ENCODE measurements at regions of chr2 and their contacts with region 1.

Region 1: GRCh38 chr2:80326214-80326613 is 21.7 kb upstream of the LRRTM1 start:
- H3K4me3 ChIP-seq: no peak overlapping the region
- H3K27ac ChIP-seq: no peak overlapping the region
- H3K4me1 ChIP-seq: no peaks in the 10 kb centered on the region
- CTCF ChIP-seq: no peak

Region 2: DNA sequence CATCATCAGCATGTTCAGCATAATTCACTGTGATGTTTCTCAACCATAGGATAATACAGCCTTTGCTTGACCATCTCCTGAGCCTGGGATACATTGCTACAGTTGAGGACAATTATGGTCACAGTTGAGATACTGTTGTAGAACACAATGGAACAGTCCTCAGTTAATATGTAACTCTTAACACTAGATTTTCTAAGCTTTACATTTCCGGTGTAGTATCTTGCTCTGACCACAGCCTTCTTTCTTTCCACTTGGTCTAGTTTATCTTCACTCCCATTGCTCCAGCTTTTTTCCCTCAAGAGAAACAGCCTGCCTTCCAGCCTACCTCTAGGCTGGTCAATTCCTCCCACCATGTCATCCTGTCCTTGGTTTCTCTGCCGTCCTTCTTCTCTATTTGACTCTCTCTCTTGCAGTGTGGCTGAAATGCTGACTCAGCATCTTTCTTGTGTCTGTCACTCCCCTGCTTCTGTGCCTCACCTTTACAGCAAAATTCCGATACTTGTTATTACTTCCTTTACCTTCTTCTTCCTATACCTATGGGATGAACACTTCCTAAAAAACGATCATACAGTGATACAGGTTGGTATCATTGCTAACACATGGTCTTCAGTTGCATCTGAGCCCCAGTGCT is 732.9 kb before region 1 on chr2:
- CTCF ChIA-PET with region 1: no interaction called
- POLR2A ChIA-PET with region 1: no interaction called
- H3K4me3 ChIP-seq: no peak overlapping the region
- H3K27ac ChIP-seq: no peak overlapping the region
- H3K4me1 ChIP-seq: no peaks in the 10 kb centered on the region
- CTCF ChIP-seq: no peak

Region 3: DNA sequence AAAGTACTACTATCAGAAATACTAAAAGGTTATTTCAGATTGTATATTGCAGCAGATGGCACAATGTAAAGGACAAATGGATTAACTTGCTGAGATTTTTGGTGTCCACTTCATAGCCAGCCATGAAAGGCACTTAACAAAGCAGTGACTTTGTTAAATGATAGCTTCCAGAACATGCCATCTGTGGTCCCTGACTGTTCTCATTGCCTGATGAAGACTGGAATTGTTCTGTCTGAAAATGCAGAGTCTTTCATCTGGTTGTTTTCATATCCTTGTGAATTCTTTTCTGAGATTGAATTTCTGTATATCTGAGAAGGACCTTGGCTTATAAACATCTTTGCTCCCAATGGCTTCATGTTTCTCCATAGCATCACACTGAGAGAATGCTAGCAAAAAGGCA is 22.7 kb after region 1 on chr2:
- CTCF ChIA-PET with region 1: interaction called, 18 read pairs
- POLR2A ChIA-PET with region 1: no interaction called
- H3K4me3 ChIP-seq: no peak overlapping the region
- H3K27ac ChIP-seq: no peak overlapping the region
- H3K4me1 ChIP-seq: no peaks in the 10 kb centered on the region
- CTCF ChIP-seq: no peak

Region 4: DNA sequence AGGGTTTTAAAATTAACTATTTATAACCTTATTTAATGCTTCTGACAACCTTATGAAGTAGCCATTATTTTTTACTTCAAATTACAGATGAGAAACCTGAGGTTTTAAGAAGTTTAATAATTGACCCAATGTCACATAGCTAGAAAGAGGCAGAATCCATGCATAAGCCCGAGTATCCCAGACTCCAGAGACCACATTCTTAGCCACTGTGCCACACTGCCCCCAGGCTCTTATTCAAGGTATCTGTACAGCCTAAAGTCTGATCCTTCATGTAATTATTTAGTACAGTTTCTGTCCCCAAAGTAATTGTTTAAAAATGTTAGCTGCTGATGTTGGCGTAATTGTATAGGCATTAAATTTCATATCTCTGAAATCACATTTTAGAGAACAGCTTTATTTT is 103.0 kb after region 1 on chr2:
- CTCF ChIA-PET with region 1: interaction called, 15 read pairs
- POLR2A ChIA-PET with region 1: no interaction called
- H3K4me3 ChIP-seq: no peak overlapping the region
- H3K27ac ChIP-seq: no peak overlapping the region
- H3K4me1 ChIP-seq: no peaks in the 10 kb centered on the region
- CTCF ChIP-seq: no peak

Region 5: DNA sequence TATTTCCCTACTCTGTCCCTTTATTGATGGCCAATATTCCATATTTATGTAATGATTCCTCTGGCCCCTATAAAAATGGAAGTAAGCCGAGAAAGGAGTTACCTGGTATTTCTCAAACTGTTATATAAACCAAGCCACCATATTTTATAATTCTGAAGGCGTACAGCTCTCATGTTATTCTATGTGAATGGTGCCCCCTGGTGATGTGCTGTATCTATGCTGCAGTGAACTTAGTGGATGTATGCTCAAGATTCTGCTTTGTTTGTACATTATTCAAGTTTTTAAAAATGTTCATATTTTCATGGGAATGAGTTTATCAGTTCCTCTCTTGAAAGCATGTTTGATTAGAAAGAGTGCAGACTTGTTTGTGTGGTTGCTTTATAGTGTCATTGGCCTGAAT is 172.9 kb after region 1 on chr2:
- CTCF ChIA-PET with region 1: interaction called, 135 read pairs
- POLR2A ChIA-PET with region 1: interaction called, 3 read pairs
- H3K4me3 ChIP-seq: no peak overlapping the region
- H3K27ac ChIP-seq: no peak overlapping the region
- H3K4me1 ChIP-seq: no peaks in the 10 kb centered on the region
- CTCF ChIP-seq: no peak